ENCODE measurements at regions of chr15 and their contacts with region 1.

Region 1: DNA sequence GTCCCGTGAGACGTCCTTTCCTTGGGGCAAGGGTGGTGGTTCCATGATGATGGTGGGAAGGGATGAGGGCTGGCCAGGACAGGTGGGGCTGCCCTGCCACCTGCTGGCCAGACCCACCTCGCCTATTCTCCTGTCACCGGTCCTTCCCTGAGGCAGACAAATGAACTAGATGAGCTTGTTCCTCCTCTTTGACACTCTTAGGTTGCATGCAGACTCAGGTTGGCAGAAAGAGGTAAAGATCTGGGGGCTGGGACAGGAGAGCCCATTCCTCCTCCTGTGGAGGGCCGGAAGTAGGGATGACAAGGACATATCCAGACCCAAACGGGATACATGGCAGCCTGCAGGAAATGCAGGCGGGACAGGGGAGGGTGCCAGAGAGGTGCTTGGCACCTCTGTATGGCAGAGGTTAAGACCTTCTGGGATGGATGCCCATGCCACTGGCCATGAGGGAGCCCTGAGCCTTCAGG is 38.6 kb downstream of the ACSBG1 start:
- DNase-seq: peak; percentile 40 to 58 (median 55)
- H3K4me3 ChIP-seq: no peak overlapping the region
- H3K27ac ChIP-seq: no peak overlapping the region
- H3K4me1 ChIP-seq: no peaks in the 10 kb centered on the region
- H3K27me3 ChIP-seq: peaks cover 0 to 2% (median 0%) of the 10 kb centered on the region in 5 experiments

Region 2: GRCh38 chr15:77840991-77841775 is 354.6 kb before region 1 on chr15:
- CTCF ChIA-PET with region 1: no interaction called
- POLR2A ChIA-PET with region 1: no interaction called
- DNase-seq: no peak
- H3K4me3 ChIP-seq: no peak overlapping the region
- H3K27ac ChIP-seq: no peak overlapping the region
- H3K4me1 ChIP-seq: peaks cover 0 to 4% (median under 1%) of the 10 kb centered on the region in 4 experiments
- H3K27me3 ChIP-seq: peaks cover 0 to 13% (median 0%) of the 10 kb centered on the region in 5 experiments

Region 3: DNA sequence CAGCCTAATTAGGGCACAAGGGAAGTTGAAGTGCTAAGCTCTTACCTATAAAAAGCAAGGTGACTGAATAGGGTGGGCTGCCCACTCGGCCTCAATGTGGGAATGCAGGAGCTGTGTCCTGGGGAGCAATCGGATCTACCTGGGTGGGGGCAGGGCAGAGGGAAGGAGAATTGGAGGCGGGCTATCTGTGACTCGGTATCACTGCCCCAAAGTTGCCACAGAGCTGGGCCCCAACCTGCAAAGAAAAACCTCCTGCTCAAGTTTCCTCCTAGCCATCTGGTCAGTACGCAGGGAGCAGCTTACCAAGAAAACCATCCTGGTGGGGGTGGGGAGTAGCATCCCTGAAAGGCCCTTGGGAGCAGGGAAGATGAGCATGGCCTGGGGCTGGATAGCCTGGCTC is 75.2 kb before region 1 on chr15:
- CTCF ChIA-PET with region 1: interaction called, 30 read pairs
- POLR2A ChIA-PET with region 1: interaction called, 4 read pairs
- DNase-seq: no peak
- H3K4me3 ChIP-seq: no peak overlapping the region
- H3K27ac ChIP-seq: no peak overlapping the region
- H3K4me1 ChIP-seq: no peaks in the 10 kb centered on the region
- H3K27me3 ChIP-seq: no peaks in the 10 kb centered on the region

Region 4: DNA sequence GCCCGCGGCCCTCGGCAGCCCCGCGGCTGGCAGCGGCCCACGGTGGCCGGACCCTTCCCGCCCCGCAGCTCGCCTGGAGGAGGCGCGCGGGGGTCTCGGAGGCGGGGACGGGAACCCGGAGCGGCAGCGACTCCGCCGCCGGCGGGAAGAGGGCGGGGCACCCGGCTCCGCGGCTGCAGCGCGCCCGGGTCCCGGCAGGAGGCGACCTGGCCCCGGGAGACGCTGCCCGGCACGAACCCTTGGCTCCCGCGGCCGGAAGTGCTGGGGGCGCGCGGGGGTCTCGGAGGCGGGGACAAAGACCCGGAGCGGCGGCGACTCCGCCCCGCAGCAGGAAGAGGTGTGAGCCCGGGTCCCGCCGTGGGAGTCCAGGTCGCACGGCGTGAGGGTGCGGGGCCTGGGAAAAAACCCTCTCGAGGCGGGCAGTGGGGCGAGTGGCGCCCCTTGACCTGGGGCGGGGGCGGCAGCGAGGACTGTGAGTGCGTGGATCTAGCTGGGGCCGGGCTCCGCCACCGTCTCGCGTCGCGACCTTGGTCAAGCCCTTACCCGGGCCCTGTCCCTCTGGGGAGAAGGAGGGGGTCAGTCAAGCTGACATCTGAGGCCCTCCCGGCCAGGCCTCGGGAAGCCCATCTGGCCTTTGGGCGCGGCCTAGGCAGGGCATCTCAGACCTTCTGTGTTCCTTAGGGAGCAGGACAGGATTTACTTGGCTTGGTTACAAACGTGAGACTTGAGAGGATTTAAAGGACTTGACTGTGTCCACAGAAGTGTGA is 64.3 kb before region 1 on chr15 and contains the start of gene CIB2:
- CTCF ChIA-PET with region 1: interaction called, 23 read pairs
- POLR2A ChIA-PET with region 1: no interaction called
- DNase-seq: peak; percentile 78 to 84 (median 81)
- H3K4me3 ChIP-seq: peak within 1 kb of the TSS; percentile 48 to 85 (median 76)
- H3K27ac ChIP-seq: peak within 1 kb of the TSS in 1 of 2 experiments; percentile 70
- H3K4me1 ChIP-seq: peaks cover 4 to 24% (median 18%) of the 10 kb centered on the region in 4 experiments
- H3K27me3 ChIP-seq: peaks cover 0 to 1% (median 0%) of the 10 kb centered on the region in 5 experiments

Region 5: DNA sequence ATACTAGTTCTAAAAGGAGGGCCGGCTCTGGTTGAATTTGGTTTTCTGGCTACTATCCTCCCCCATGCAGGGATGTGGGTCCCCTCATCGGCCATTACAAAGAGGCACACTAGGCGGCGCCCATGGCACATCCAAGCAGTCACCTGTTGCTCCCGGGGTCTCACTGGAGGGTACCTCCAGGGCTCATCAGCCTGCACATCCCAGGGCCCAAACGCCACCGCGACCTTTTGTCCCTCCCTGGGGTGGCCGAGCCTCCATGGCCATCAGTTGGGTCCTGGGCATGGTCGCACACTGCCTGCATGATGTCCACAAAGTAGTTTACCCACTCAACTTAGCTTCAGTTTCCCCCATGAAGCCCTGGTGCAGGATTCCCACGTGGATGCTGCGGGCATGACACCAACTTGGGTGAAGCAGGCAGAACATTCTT is 18.3 kb before region 1 on chr15:
- CTCF ChIA-PET with region 1: interaction called, 66 read pairs
- POLR2A ChIA-PET with region 1: no interaction called
- DNase-seq: peak in 2 of 3 donors; percentile 41 to 50
- H3K4me3 ChIP-seq: no peak overlapping the region
- H3K27ac ChIP-seq: no peak overlapping the region
- H3K4me1 ChIP-seq: peaks cover 11 to 33% (median 28%) of the 10 kb centered on the region in 4 experiments
- H3K27me3 ChIP-seq: no peaks in the 10 kb centered on the region